ENCODE measurements at regions of chr5 and their contacts with region 1.

Region 1: GRCh38 chr5:149517461-149518122 is 33.6 kb downstream of the CSNK1A1 start:
- DNase-seq: peak in 6 of 10 donors; percentile 19 to 84 (median 35)

Region 2: GRCh38 chr5:149551200-149552037 is 33.8 kb after region 1 on chr5 and contains the start of gene CSNK1A1:
- intact Hi-C with region 1: loop called (anchors 5 kb)
- DNase-seq: peak; percentile 94 to 99 (median 96)

Measured in posterior cingulate gyrus (tissue), 11 donors.